ENCODE measurements at regions of chr2 and their contacts with region 1.

Region 1: GRCh38 chr2:45275242-45275805 is 266.1 kb upstream of the SIX2 start:
- DNase-seq: peak; percentile 64 to 94
- H3K4me3 ChIP-seq: no peak overlapping the region
- H3K27ac ChIP-seq: peak overlapping the region; percentile 77
- H3K4me1 ChIP-seq: peaks cover 52% of the 10 kb centered on the region
- H3K27me3 ChIP-seq: no peaks in the 10 kb centered on the region
- CTCF ChIP-seq: no peak

Region 2: DNA sequence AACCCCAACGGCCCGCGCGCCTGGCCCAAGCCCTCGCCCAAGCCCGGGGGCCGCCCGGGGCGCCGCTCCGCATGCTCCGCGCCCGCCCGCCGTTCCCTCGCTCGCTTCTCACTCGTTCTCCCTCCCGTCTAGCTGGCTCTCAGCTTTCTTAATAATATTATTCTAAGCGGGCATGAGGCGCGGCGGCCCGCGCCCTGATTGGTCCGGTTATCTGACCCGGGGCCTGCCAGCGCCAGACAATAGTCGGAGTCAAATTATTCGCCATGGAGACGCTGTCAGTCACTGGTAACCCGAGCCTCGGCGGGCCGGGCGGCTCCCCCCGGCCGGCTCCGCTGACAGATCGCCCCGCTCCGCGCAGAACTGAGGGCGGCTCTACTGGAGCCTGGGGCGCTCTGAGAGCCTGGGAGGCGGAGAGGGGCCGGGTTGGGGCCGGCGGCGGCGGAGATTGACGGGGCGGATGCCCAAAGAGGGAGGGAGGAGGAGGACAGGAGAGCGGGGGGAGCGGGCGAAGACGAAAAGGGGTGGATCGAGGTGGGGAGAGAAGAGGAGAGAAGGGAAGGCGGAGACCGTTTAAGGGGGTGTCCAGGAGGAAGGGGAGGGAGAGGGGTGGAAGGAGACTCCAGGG is 265.9 kb before region 1 on chr2 and contains the start of gene SIX2:
- CTCF ChIA-PET with region 1: no interaction called
- POLR2A ChIA-PET with region 1: no interaction called
- intact Hi-C with region 1: loop called (anchors 5 kb)
- DNase-seq: peak; percentile 98 to 99
- H3K4me3 ChIP-seq: peak within 1 kb of the TSS; percentile 69
- H3K27ac ChIP-seq: no peak within 1 kb of the TSS
- H3K4me1 ChIP-seq: peaks cover 23% of the 10 kb centered on the region
- H3K27me3 ChIP-seq: no peaks in the 10 kb centered on the region
- CTCF ChIP-seq: no peak
- total RNA-seq, gene SIX2: 10.2 and 11.9 TPM in 2 replicates

Region 3: GRCh38 chr2:45119855-45120254 is 155.5 kb before region 1 on chr2:
- CTCF ChIA-PET with region 1: no interaction called
- POLR2A ChIA-PET with region 1: interaction called, 5 read pairs
- intact Hi-C with region 1: loop called (anchors 5 kb)
- DNase-seq: peak; percentile 67 to 100
- H3K4me3 ChIP-seq: no peak overlapping the region; the same call in 1 of the 2 replicates
- H3K27ac ChIP-seq: peak overlapping the region; percentile 85
- H3K4me1 ChIP-seq: peaks cover 63% of the 10 kb centered on the region
- H3K27me3 ChIP-seq: no peaks in the 10 kb centered on the region
- CTCF ChIP-seq: no peak

Region 4: GRCh38 chr2:45220227-45220626 is 55.1 kb before region 1 on chr2:
- CTCF ChIA-PET with region 1: no interaction called
- POLR2A ChIA-PET with region 1: no interaction called
- intact Hi-C with region 1: loop called (anchors 1 kb)
- DNase-seq: peak; percentile 24 to 47
- H3K4me3 ChIP-seq: no peak overlapping the region
- H3K27ac ChIP-seq: no peak overlapping the region
- H3K4me1 ChIP-seq: peaks cover 30% of the 10 kb centered on the region
- H3K27me3 ChIP-seq: no peaks in the 10 kb centered on the region
- CTCF ChIP-seq: no peak